CD4-positive, alpha-beta memory T cell (primary cell): ENCODE measurements at regions of chr2 and their contacts with region 1.

Region 1: DNA sequence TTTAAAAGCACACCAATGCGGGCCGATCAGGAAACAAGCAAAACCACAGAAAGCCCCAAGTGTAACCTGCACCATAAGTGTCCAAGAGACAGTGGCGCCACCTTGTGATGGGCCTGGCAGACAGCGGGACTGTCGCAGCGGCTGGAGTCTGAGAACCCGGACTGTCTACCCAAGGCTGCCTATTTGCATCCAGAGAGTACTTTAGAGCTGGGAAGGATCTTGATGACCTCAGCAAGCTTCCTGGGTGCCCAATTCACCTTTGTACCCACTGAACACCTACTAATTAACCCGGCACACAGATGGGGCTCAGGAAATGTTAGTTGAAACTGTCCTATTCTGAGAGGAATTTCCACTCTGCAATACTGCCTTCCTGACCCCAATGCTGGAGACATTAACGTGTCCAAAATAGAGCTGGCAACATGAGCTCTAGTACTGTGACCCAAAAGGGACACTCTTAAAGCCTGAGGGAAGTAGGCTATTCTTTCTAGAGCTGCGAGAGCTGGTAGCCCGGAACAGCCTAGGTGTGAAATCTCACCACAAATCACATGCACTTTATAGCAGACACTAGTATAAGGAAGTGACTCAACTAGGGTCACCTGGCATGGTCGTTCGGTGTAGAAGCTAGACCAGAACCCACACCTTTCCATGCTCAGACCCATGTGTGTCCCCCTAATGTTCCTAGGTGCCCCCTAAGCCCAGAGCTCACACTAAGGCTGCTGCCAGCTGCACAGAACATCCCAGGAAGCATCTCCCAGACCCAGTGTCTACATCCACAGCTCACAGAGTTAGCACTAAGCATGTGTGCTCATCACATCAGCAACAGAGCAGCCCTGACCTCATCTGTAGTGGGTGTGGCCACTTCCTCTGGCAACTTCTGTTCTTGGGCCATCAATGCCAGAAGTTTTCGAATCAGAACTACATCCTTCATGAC is 25.4 kb downstream of the POLR1A start:
- DNase-seq: peak; percentile 79 to 87 (median 82)
- H3K4me3 ChIP-seq: no peak overlapping the region
- H3K4me3 Mint-ChIP-seq: peak overlapping the region in 7 of 8 donors; percentile 18 to 74 (median 57)
- H3K27ac ChIP-seq: peak overlapping the region; percentile 64
- H3K27ac Mint-ChIP-seq: peak overlapping the region; percentile 85 to 96 (median 95)
- H3K4me1 ChIP-seq: peaks cover 21% of the 10 kb centered on the region
- H3K4me1 Mint-ChIP-seq: peaks cover 15 to 54% (median 37%) of the 10 kb centered on the region in 4 donors
- H3K27me3 ChIP-seq: no peaks in the 10 kb centered on the region
- H3K27me3 Mint-ChIP-seq: no peaks in the 10 kb centered on the region

Region 2: GRCh38 chr2:85728883-85729824 is 351.1 kb before region 1 on chr2:
- CTCF ChIA-PET with region 1: interaction called, 14 read pairs
- POLR2A ChIA-PET with region 1: no interaction called
- intact Hi-C with region 1: no loop called
- DNase-seq: peak in 4 of 5 donors; percentile 51 to 61 (median 54)
- H3K4me3 ChIP-seq: no peak overlapping the region
- H3K4me3 Mint-ChIP-seq: no peak overlapping the region
- H3K27ac ChIP-seq: no peak overlapping the region
- H3K27ac Mint-ChIP-seq: peak overlapping the region in 1 of 7 donors; percentile 48
- H3K4me1 ChIP-seq: peaks cover 5% of the 10 kb centered on the region
- H3K4me1 Mint-ChIP-seq: peaks cover 0 to 5% (median 2%) of the 10 kb centered on the region in 4 donors
- H3K27me3 ChIP-seq: peaks cover 10% of the 10 kb centered on the region
- H3K27me3 Mint-ChIP-seq: peaks cover 5 to 9% of the 10 kb centered on the region in 2 donors

Region 3: DNA sequence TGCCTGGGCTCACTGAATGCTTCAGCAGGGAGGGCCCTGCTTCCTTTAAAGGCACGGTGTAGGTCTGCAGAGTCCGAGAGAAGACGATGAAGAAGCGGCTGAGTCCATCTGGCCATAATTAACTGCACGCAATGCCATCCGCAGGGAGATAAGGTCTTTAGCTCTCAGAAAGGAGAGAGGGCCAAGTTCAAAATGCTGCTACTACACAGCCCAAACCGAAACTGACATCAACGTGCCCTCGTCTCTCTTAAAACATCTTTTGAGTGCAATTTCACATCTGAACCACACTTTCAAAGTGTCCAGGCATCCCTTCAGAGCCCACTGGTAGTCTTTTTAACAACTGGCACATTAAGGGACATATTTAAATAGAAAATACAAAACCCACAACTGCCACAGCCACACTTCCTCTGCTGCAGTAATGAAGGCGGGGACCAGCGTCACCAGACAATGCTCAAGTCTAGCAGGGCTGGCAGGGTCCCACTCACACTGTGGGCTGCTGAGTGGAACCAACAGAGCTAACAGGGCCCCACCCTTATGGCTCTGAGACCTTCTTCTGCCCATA is 227.2 kb before region 1 on chr2:
- CTCF ChIA-PET with region 1: interaction called, 49 read pairs
- POLR2A ChIA-PET with region 1: interaction called, 13 read pairs
- intact Hi-C with region 1: no loop called
- DNase-seq: peak; percentile 73 to 88 (median 74)
- H3K4me3 ChIP-seq: peak overlapping the region; percentile 34 to 48
- H3K4me3 Mint-ChIP-seq: peak overlapping the region; percentile 82 to 92 (median 86)
- H3K27ac ChIP-seq: peak overlapping the region; percentile 84
- H3K27ac Mint-ChIP-seq: peak overlapping the region; percentile 98 to 100 (median 100)
- H3K4me1 ChIP-seq: peaks cover 81% of the 10 kb centered on the region
- H3K4me1 Mint-ChIP-seq: peaks cover 67 to 87% (median 76%) of the 10 kb centered on the region in 4 donors
- H3K27me3 ChIP-seq: no peaks in the 10 kb centered on the region
- H3K27me3 Mint-ChIP-seq: no peaks in the 10 kb centered on the region

Region 4: GRCh38 chr2:86017901-86018896 is 62.0 kb before region 1 on chr2:
- CTCF ChIA-PET with region 1: interaction called, 10 read pairs
- POLR2A ChIA-PET with region 1: interaction called, 5 read pairs
- intact Hi-C with region 1: no loop called
- DNase-seq: no peak
- H3K4me3 ChIP-seq: no peak overlapping the region
- H3K4me3 Mint-ChIP-seq: no peak overlapping the region
- H3K27ac ChIP-seq: no peak overlapping the region
- H3K27ac Mint-ChIP-seq: peak overlapping the region in 5 of 7 donors; percentile 57 to 90 (median 68)
- H3K4me1 ChIP-seq: peaks cover 14% of the 10 kb centered on the region
- H3K4me1 Mint-ChIP-seq: peaks cover 6 to 19% (median 11%) of the 10 kb centered on the region in 4 donors
- H3K27me3 ChIP-seq: no peaks in the 10 kb centered on the region
- H3K27me3 Mint-ChIP-seq: no peaks in the 10 kb centered on the region

Region 5: GRCh38 chr2:86035883-86036668 is 44.2 kb before region 1 on chr2:
- CTCF ChIA-PET with region 1: interaction called, 113 read pairs
- POLR2A ChIA-PET with region 1: interaction called, 39 read pairs
- intact Hi-C with region 1: loop called (anchors 1 kb)
- DNase-seq: peak; percentile 79 to 88 (median 84)
- H3K4me3 ChIP-seq: peak overlapping the region; percentile 28 to 37
- H3K4me3 Mint-ChIP-seq: peak overlapping the region; percentile 74 to 87 (median 84)
- H3K27ac ChIP-seq: peak overlapping the region; percentile 82
- H3K27ac Mint-ChIP-seq: peak overlapping the region; percentile 96 to 100 (median 100)
- H3K4me1 ChIP-seq: peaks cover 81% of the 10 kb centered on the region
- H3K4me1 Mint-ChIP-seq: peaks cover 56 to 82% (median 68%) of the 10 kb centered on the region in 4 donors
- H3K27me3 ChIP-seq: no peaks in the 10 kb centered on the region
- H3K27me3 Mint-ChIP-seq: peaks cover 0 to 2% of the 10 kb centered on the region in 2 donors

Region 6: DNA sequence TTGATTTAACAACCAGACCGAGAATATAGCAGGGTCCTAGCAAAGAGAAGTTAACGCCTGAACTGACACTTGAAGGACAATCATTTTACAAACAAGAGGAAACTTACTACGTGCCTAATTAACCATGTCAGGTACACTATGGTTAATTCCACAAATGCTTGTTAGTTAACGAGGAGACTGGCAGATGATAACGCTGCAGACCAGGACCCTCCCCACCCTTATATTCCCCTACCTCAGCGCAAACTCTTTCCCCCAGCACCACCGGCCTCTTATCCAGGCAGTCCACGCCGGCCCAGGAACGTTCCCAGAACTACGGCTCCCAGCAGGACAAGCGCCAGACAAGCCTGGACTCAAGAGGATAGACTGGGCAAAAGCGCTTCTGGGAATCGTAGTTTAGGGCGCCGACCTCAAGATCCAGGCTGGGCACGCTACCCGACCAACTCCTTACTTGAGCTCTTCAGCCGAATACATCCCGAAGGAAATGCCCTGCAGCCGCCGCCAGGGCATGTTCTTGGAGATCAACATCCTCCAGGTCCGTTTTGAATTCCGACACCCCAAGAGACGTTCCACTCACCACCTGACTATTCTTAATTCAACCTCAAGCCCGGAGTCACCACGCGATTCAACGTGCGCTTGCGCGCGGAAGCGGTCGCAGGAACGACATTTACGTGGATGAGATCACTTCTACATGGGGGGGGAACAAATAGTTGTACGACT is 25.2 kb after region 1 on chr2 and contains the start of gene POLR1A:
- CTCF ChIA-PET with region 1: interaction called, 14 read pairs
- POLR2A ChIA-PET with region 1: interaction called, 13 read pairs
- intact Hi-C with region 1: no loop called
- DNase-seq: peak; percentile 88 to 91 (median 90)
- H3K4me3 ChIP-seq: peak within 1 kb of the TSS; percentile 73 to 83
- H3K4me3 Mint-ChIP-seq: peak within 1 kb of the TSS; percentile 88 to 96 (median 92)
- H3K27ac ChIP-seq: peak within 1 kb of the TSS; percentile 82
- H3K27ac Mint-ChIP-seq: peak within 1 kb of the TSS; percentile 93 to 100 (median 99)
- H3K4me1 ChIP-seq: peaks cover 34% of the 10 kb centered on the region
- H3K4me1 Mint-ChIP-seq: peaks cover 47 to 79% (median 61%) of the 10 kb centered on the region in 4 donors
- H3K27me3 ChIP-seq: no peaks in the 10 kb centered on the region
- H3K27me3 Mint-ChIP-seq: no peaks in the 10 kb centered on the region
- total RNA-seq, gene POLR1A: 23.4 to 25.8 TPM

Region 7: DNA sequence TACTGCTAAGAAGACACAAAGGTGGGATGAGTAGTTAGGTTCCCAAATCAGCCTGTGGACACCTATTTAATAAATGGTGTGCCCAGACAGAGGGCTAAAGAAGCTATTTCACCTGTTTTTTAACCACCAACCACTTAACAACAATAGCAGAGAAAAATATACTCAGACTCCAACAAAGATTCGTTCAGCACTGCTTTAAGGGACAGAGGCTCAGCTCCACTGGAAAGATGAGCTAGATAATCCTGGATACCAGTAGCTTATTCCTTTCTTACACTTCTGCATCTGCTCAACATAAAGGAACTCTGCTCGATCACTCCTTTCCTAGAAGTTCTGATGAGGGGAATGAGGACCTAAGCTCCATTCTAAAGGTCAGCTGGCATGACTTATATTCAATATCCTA is 70.3 kb after region 1 on chr2:
- CTCF ChIA-PET with region 1: no interaction called
- POLR2A ChIA-PET with region 1: no interaction called
- intact Hi-C with region 1: no loop called
- DNase-seq: no peak
- H3K4me3 ChIP-seq: no peak overlapping the region
- H3K4me3 Mint-ChIP-seq: no peak overlapping the region
- H3K27ac ChIP-seq: no peak overlapping the region
- H3K27ac Mint-ChIP-seq: peak overlapping the region in 3 of 7 donors; percentile 58 to 85 (median 65)
- H3K4me1 ChIP-seq: no peaks in the 10 kb centered on the region
- H3K4me1 Mint-ChIP-seq: peaks cover 0 to 4% (median 3%) of the 10 kb centered on the region in 4 donors
- H3K27me3 ChIP-seq: no peaks in the 10 kb centered on the region
- H3K27me3 Mint-ChIP-seq: no peaks in the 10 kb centered on the region